ENCODE measurements at regions of chr15 and their contacts with region 1.

Region 1: DNA sequence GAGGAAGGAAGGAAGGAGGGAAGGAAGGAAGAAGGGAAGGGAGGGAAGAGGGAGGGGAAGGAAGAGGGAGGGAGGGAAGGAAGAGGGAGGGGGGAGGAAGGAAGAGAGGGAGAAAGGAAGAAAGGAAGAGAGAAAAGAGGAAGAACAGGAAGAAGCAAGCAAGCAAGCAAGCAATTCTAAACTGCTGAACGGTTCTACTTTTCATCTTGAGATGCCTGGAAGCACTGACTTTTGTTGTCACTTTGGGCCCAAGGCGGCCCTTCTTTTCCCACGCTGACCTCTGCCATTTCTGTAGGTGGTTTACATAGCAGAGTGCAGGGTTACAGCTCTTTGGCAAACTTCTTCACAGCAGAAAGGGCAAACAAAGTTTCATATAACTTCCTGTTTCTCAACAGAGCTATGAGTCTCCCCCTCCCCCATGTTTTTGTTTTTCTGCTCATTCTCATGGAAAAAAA is 342.1 kb upstream of the NR2F2 start:
- DNase-seq: peak in 1 of 2 donors; percentile 26
- ATAC-seq: peak; percentile 81 to 89
- H3K4me3 ChIP-seq: peak overlapping the region in 1 of 4 donors; percentile 20
- H3K27ac ChIP-seq: peak overlapping the region; percentile 53 to 74 (median 60)
- H3K4me1 ChIP-seq: peaks cover 13 to 18% of the 10 kb centered on the region in 2 donors
- H3K27me3 ChIP-seq: no peaks in the 10 kb centered on the region
- CTCF ChIP-seq: no peak
- POLR2A ChIP-seq: no peak

Region 2: GRCh38 chr15:95528920-95529319 is 459.5 kb before region 1 on chr15:
- in situ Hi-C with region 1: no loop called
- intact Hi-C with region 1: no loop called
- DNase-seq: no peak
- ATAC-seq: no peak
- H3K4me3 ChIP-seq: no peak overlapping the region
- H3K27ac ChIP-seq: no peak overlapping the region
- H3K4me1 ChIP-seq: no peaks in the 10 kb centered on the region
- H3K27me3 ChIP-seq: no peaks in the 10 kb centered on the region
- CTCF ChIP-seq: no peak
- POLR2A ChIP-seq: no peak

Region 3: DNA sequence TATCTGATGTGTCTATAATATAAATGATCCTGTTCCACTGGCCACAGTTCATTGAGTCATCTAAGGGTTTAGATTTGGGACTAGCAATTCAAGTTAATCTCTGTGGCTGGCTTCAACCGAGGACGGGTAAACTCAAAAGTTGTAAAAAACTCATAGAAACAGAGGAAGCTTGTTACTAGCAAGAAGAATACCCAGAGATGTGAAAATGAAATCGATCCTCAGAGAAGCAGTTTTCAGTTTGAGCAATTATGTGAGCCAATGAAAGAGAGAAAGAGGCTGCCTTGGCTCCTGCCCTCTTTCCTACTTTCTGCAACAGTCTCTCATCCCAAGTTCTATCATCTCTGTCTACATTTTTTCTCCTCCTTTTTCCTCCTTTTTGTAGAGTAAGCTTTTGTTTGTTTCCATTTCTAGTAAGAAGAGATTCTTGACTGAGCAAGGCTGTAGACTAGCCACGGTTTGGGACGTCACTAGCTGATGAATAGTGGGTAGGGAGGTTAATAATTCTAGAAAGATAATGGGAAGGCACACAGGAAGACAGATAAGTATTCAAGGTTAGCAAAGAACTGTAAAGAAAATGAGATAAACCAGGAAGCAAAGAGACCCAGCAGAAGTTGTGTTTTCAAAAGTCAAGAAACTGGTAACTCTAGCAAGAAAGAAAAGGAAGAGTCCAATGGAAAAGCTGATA is 43.2 kb after region 1 on chr15:
- in situ Hi-C with region 1: no loop called
- intact Hi-C with region 1: loop called (anchors 2 kb)
- DNase-seq: no peak
- ATAC-seq: no peak
- H3K4me3 ChIP-seq: no peak overlapping the region
- H3K27ac ChIP-seq: no peak overlapping the region
- H3K4me1 ChIP-seq: peaks cover 3 to 7% of the 10 kb centered on the region in 2 donors
- H3K27me3 ChIP-seq: no peaks in the 10 kb centered on the region
- CTCF ChIP-seq: no peak
- POLR2A ChIP-seq: no peak

Region 4: DNA sequence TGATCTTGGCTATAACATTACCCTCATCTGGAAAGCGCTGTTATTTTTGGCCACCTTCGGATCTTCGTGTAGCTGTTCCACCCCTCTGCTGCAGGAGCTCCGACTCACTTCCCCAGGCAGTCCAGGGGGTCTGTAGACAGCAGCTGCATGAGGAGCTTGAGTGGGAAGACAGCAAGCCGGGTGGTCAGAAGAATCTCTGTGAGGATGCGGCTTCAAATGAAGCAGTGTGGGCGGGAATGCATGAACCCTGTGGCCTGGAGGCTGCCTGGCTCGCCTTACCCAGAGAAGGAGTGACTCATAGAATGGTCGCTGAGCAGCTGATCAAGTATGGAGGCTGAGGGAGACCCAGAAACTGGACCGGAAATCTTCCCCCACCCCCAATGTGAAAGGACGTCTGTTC is 296.9 kb after region 1 on chr15:
- in situ Hi-C with region 1: no loop called
- intact Hi-C with region 1: loop called (anchors 10 kb)
- DNase-seq: peak; percentile 13 to 51
- ATAC-seq: peak; percentile 36 to 47
- H3K4me3 ChIP-seq: peak overlapping the region in 3 of 4 donors; percentile 27 to 32 (median 29)
- H3K27ac ChIP-seq: peak overlapping the region; percentile 68 to 83 (median 81)
- H3K4me1 ChIP-seq: peaks cover 19 to 25% of the 10 kb centered on the region in 2 donors
- H3K27me3 ChIP-seq: no peaks in the 10 kb centered on the region
- CTCF ChIP-seq: no peak
- POLR2A ChIP-seq: no peak

Measured in gastrocnemius medialis (tissue), 4 donors.